PC-9 (cell line): ENCODE measurements at regions of chr7 and their contacts with region 1.

Region 1: DNA sequence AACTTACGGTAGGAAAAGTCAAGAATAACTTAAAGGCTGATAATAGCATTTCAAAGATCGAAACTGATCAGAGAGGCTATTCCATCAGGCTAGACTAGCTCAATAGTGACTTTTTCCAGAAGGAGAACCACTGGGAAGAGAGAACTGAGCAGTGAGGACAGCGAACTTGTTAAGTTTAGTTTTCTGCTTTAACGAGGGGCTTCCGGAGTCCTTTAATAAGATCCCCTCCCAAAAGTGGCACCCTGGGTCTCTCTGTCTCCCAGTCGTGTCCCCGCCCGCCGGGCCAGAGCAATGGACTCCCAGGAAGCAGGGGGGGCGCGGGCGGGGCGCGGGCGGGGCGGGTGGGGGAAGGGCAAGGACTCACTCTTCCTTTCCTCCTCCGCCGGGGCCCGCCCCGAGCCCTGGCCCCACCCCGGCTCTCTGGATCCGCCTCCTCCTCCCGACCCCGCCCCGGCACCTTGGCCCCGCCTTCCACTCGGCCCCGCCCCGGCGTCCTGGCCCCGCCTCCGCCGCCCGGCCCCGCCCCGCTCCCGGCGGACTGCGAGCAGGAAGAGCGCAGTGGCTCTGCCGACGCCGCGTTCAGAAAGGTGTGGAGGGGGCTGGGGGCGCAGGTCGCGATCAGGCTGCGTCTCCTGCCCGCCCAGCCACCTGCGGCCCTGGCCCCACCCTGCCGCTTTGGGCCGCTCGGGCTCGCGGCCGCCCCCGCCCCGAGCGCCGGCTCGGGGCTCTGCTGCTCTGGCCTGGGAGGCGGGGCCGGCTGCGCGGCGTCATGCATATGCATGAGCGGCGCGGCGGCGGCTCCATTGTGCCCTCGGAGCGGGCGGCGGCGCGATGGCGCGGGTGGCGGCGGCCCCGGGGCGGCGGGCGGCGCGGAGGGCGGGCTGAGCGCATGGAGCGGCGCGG is at the start of gene ZMIZ2:
- DNase-seq: peak; percentile 77 to 97
- H3K4me3 ChIP-seq: peak within 1 kb of the TSS; percentile 92
- H3K27ac ChIP-seq: peak within 1 kb of the TSS; percentile 57
- H3K4me1 ChIP-seq: peaks cover 37% of the 10 kb centered on the region
- H3K27me3 ChIP-seq: no peaks in the 10 kb centered on the region
- CTCF ChIP-seq: no peak
- total RNA-seq, gene ZMIZ2: 97.5 and 142 TPM in 2 replicates

Region 2: DNA sequence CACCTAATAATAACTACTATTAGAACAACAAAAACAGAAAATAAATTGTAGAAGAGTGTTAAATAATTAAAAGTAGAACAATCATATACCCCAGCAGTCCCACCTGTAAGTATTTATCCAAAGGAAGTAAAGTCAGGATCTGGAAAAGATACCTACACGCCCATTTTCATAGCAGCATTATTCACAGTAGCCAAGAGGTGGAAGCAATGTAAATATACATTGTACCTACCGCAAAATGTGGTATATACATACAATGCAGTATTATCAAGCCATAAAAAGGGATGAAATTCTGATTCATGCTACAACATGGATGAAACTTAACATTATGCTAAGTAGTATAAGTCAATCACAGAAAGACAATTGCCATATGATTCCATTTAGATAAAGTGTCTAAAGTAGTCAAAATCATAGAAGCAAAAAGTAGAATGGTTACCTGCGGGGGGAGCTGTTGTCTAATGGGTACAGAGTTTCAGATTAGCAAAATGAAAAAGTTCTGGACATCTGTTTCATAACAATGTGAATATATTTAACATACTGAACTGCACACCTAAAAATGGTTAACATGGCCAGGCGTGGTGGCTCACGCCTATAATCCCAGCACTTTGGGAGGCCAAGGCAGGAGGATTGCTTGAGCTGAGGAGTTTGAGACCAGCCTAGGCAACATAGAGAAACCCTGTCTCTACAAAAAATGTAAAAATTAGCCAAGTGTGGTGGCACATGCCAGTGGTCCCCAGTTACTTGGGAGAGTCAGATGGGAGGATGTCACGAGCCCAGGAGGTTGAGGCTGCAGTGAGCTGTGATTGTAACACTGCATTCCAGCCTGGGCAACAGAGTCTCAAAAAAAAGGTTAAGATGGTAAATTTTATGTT is 160.2 kb before region 1 on chr7:
- CTCF ChIA-PET with region 1: no interaction called
- POLR2A ChIA-PET with region 1: no interaction called
- intact Hi-C with region 1: loop called (anchors 2 kb)
- DNase-seq: peak; percentile 69 to 74
- H3K4me3 ChIP-seq: no peak overlapping the region
- H3K27ac ChIP-seq: no peak overlapping the region
- H3K4me1 ChIP-seq: peaks cover 11% of the 10 kb centered on the region
- H3K27me3 ChIP-seq: no peaks in the 10 kb centered on the region
- CTCF ChIP-seq: peak; percentile 95

Region 3: GRCh38 chr7:44618743-44619142 is 129.6 kb before region 1 on chr7:
- CTCF ChIA-PET with region 1: no interaction called
- POLR2A ChIA-PET with region 1: no interaction called
- intact Hi-C with region 1: loop called (anchors 2 kb)
- DNase-seq: peak; percentile 93 to 99
- H3K4me3 ChIP-seq: peak overlapping the region; percentile 52; the same call in 1 of the 2 replicates
- H3K27ac ChIP-seq: peak overlapping the region; percentile 87
- H3K4me1 ChIP-seq: peaks cover 86% of the 10 kb centered on the region
- H3K27me3 ChIP-seq: no peaks in the 10 kb centered on the region
- CTCF ChIP-seq: no peak

Region 4: DNA sequence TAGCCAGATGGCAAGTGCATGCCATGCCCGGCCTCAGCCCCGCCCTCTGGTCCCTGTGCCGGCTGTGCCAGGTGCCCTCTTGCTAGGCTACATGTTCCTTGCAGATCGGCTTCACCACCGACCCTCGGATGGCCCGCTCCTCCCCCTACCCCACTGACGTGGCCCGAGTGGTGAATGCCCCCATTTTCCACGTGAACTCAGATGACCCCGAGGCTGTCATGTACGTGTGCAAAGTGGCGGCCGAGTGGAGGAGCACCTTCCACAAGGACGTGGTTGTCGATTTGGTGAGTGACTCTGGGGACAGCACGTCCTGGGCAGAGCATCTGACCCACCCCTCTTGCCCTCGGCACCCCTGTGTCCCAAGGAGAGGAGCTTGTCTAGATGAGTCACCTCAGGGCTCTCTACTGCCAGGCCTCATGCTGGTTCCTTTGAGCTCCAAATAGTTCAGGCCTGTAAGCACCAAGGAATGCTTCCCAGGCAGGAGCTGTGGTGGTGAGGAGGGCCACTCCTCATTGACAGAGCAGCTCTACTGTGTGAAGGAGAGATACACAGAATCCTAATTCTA is 54.5 kb before region 1 on chr7:
- CTCF ChIA-PET with region 1: interaction called, 5 read pairs
- POLR2A ChIA-PET with region 1: no interaction called
- intact Hi-C with region 1: loop called (anchors 10 kb)
- DNase-seq: peak; percentile 29 to 60
- H3K4me3 ChIP-seq: no peak overlapping the region
- H3K27ac ChIP-seq: no peak overlapping the region
- H3K4me1 ChIP-seq: no peaks in the 10 kb centered on the region
- H3K27me3 ChIP-seq: no peaks in the 10 kb centered on the region
- CTCF ChIP-seq: no peak

Region 5: GRCh38 chr7:44797329-44798251 is 49.3 kb after region 1 on chr7:
- CTCF ChIA-PET with region 1: no interaction called
- POLR2A ChIA-PET with region 1: interaction called, 3 read pairs
- intact Hi-C with region 1: loop called (anchors 1 kb)
- DNase-seq: peak; percentile 87
- H3K4me3 ChIP-seq: peak overlapping the region; percentile 67
- H3K27ac ChIP-seq: peak overlapping the region; percentile 93
- H3K4me1 ChIP-seq: peaks cover 26% of the 10 kb centered on the region
- H3K27me3 ChIP-seq: no peaks in the 10 kb centered on the region
- CTCF ChIP-seq: peak; percentile 79; the same call in 1 of the 2 replicates

Region 6: DNA sequence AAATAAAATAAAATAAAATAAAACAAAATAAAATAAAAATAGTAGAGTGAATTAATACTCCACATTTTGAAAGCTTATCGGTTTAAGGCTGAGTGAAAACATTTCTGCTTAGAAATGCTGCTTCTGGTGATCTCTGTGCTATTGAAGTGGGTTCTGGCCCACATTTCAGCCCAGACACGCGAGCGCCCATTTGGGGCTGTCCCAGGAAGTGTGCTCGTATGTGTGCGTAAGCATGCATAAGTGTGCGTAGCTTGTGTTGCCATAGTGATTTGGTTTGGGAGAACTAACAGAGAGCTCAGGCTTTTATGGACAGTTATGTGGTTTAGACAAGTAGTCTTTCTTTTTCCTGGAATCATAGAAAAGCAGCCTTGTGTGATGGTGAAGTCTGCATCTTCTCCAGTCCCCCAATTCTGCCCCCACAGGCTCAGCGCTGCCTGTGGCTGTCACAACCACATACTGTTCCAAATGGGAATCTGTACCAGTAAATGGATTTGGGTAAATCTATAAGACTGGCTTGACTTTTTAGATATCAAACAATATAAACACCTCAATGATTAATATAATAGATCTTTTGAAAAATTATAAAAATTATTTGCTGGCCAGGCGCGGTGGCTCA is 166.8 kb after region 1 on chr7:
- CTCF ChIA-PET with region 1: no interaction called
- POLR2A ChIA-PET with region 1: interaction called, 17 read pairs
- intact Hi-C with region 1: no loop called
- DNase-seq: no peak
- H3K4me3 ChIP-seq: no peak overlapping the region
- H3K27ac ChIP-seq: no peak overlapping the region
- H3K4me1 ChIP-seq: peaks cover 23% of the 10 kb centered on the region
- H3K27me3 ChIP-seq: no peaks in the 10 kb centered on the region
- CTCF ChIP-seq: no peak